ENCODE measurements at regions of chr15 and their contacts with region 1.

Region 1: GRCh38 chr15:78077058-78077877 is at the start of gene TBC1D2B:
- DNase-seq: peak; percentile 51
- H3K4me3 ChIP-seq: peak within 1 kb of the TSS; percentile 56 to 84 (median 63)
- H3K27ac ChIP-seq: peak within 1 kb of the TSS; percentile 87
- H3K4me1 ChIP-seq: peaks cover 17% of the 10 kb centered on the region
- H3K27me3 ChIP-seq: no peaks in the 10 kb centered on the region
- CTCF ChIP-seq: no peak
- POLR2A ChIP-seq: peak; percentile 59
- total RNA-seq, gene TBC1D2B: 45.4 and 46.1 TPM in 2 replicates

Region 2: DNA sequence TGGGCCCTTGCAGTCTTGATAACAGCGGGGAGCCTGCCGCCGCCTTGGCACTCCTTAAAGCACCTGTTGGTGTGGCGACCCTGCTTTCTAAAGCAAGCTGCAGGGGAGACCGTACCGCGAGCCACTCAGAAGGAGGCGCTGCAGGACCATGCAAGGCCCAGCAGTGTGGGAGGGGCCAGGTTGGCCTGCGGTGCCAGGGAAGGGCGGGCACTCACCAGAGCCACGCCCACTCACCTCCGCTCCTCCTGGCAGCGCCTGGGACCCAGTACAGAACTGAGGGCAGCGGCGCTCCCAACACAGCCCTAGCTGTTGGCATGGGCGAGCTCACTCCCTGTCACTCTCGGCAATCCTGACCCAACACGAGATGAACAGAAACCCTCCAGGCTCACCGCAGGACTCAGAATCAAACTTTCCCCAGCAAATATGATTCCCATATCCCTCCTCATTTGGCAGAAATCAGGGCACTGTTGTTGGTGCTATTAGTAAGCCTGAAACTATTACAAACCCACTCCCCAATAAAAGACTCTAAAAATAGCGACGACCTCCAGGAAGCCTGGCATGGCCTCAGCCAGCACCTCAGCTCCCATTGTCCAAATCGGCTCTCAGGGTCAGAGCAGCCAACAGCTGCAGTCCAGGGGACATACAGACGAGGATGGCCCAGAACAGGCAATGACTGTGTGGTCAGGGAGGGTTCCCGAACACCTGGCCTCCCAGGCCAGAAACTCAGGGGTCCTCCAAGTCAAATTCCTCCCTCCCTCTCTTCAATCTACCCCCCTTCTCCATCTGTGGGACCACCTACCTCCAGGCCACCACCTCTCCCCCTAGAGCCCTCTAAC is 77.0 kb before region 1 on chr15:
- CTCF ChIA-PET with region 1: interaction called, 5 read pairs
- POLR2A ChIA-PET with region 1: no interaction called
- dilution Hi-C with region 1: no loop called
- intact Hi-C with region 1: loop called (anchors 1 kb)
- DNase-seq: peak; percentile 79
- H3K4me3 ChIP-seq: no peak overlapping the region
- H3K27ac ChIP-seq: no peak overlapping the region
- H3K4me1 ChIP-seq: no peaks in the 10 kb centered on the region
- H3K27me3 ChIP-seq: no peaks in the 10 kb centered on the region
- CTCF ChIP-seq: peak; percentile 83 to 88
- POLR2A ChIP-seq: no peak

Region 3: DNA sequence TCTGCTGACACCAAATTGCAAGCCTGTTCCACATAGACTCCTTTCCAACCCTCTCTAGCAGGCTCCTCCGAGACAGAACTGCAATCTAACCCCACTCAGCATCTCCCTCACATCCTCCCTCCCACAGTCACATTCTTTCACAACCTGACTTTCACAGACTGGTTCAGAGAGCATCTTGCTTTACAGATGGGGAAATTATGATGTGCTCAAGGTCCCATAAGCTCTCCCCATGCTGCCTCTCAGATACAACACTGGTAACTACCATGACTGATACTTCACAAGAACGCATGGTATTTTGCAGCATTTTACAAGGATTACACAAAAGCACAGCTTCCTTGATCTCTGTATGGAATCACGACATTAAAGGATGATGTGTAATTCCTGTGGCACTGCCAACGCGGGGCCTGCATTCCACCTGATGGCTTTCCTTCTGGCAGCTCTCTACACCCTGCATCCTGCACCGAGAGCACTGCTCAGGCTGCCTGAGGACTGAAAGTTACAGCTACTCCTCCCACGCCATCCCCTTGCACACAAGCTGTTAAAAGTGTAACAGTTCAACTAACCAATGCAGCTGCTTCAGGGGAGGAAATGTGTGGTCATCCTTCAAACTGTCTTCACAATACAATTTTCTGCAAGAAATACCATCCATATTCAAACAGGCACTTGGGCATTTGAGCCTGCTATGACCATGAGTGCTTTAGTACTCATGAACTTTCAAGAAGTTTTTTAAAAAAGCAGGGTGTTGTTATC is 27.4 kb before region 1 on chr15:
- CTCF ChIA-PET with region 1: interaction called, 9 read pairs
- POLR2A ChIA-PET with region 1: no interaction called
- dilution Hi-C with region 1: no loop called
- intact Hi-C with region 1: loop called (anchors 1 kb)
- DNase-seq: no peak
- H3K4me3 ChIP-seq: no peak overlapping the region
- H3K27ac ChIP-seq: no peak overlapping the region
- H3K4me1 ChIP-seq: peaks cover 45% of the 10 kb centered on the region
- H3K27me3 ChIP-seq: no peaks in the 10 kb centered on the region
- CTCF ChIP-seq: no peak
- POLR2A ChIP-seq: no peak

Region 4: DNA sequence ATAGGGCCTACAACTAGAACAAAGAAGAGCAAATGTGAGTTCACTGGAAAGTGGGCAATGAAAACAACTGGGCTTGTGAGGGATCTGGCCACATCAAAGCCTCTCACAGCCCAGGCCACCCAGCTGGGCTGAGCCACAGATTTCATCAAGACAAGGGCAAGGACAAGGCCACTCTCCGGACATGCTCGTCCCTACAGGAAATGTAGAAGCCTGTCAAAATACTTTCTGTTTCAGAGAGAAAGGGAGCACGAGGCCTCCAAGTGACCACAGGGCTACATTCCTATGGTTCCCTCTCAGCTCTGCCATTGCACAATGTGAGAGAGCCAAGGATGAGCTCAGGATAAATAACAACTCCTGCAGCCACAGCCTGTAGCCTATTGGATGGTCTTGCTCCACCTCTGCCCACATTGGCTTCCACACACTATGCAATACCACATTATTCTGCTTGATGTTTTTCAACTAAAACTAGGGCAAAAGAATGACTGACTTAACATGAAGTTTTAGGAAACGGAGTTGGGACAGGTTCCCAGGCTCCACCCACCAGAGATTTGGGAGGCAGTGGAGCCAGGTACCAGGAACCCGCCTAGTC is 11.9 kb before region 1 on chr15:
- CTCF ChIA-PET with region 1: interaction called, 5 read pairs
- POLR2A ChIA-PET with region 1: no interaction called
- dilution Hi-C with region 1: no loop called
- intact Hi-C with region 1: loop called (anchors 1 kb)
- DNase-seq: peak; percentile 68
- H3K4me3 ChIP-seq: no peak overlapping the region
- H3K27ac ChIP-seq: peak overlapping the region; percentile 27
- H3K4me1 ChIP-seq: peaks cover 61% of the 10 kb centered on the region
- H3K27me3 ChIP-seq: no peaks in the 10 kb centered on the region
- CTCF ChIP-seq: no peak
- POLR2A ChIP-seq: no peak